Right ventricle myocardium inferior (tissue), 1 donor: ENCODE measurements at regions of chr17 and their contacts with region 1.

Region 1: DNA sequence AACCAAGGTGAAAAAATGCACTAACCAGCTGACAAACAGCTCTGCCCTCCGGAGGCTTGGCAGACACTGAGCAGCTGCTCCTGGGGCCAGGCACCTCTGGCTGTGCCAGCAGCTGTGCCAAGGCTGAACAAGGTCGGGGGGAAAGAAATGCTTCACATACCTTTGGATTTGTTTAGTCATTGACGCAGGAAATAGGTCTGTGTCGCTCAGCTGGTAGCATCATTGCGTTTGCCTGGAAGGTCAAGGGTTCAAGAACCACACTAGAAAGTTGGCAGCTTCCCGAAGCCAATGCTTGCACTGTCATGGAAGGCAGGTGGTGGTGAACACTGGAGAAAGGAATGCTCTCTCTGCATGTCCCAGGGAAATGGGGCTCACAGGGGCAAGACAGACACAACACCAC is 63.5 kb downstream of the PCTP start:
- DNase-seq: peak; percentile 70
- ATAC-seq: peak; percentile 90

Region 2: GRCh38 chr17:54920819-54921218 is 893.6 kb before region 1 on chr17:
- intact Hi-C with region 1: no loop called
- DNase-seq: no peak
- ATAC-seq: no peak

Region 3: DNA sequence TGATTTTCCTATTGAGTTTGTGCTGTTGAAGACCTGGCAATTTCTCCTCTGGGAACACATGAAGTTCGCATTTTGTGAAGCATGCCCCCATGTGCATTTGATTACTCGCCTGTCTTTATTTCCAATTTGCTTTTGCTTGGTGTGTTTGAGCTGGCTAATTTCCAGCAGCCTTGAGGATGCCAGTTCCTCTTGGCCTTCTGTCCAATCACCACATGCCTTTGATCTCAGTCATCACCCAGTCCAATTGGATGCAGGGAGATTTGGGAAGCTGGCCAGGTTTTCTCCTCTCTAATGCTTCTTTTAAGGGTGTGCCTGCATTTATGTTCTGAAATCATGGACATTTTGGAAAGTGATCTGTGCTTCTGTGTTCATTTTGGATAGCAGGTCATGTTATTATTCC is 87.9 kb before region 1 on chr17:
- intact Hi-C with region 1: loop called (anchors 5 kb)
- DNase-seq: no peak
- ATAC-seq: no peak

Region 4: DNA sequence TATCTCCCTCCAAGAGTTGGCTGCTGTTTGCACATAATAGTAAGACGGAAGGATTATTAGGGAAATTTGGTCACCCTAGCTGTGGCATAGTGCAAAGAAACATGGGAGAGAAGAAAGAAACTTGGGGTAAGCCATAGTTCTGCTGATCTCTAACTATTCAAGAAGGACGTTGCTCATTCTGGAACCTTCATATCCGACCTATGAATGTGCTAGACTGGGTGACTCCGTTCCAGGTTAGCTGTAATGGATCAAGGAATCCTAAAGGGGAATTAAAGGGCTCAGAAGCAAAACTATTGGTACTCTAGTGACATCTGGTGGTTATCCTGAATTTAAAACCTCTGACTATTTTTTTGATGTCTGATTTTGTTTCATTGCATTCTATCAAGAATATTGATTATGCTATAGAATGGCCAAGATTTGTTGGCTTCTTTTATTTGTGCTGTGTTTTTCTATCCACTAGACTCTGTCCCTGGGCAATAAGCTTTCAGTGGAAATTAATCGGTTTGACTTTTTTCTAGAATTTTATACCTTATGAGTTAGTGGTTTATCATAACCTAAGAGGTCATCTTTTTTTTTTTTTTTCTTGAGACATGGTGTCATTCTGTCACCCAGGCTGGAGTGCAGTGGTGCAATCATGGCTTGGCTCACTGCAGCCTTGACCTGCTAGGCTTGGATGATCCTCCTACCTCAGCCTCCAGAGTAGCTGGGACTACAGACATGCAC is 44.1 kb before region 1 on chr17:
- intact Hi-C with region 1: no loop called
- DNase-seq: no peak
- ATAC-seq: peak; percentile 57